CD4-positive, alpha-beta T cell (primary cell): ENCODE measurements at regions of chr3 and their contacts with region 1.

Region 1: GRCh38 chr3:197256836-197257444 is 41.5 kb downstream of the DLG1 start:
- DNase-seq: peak in 9 of 14 experiments; percentile 9 to 74 (median 21)
- ATAC-seq: no peak
- H3K4me3 ChIP-seq: no peak overlapping the region
- H3K4me3 Mint-ChIP-seq: no peak overlapping the region
- H3K27ac ChIP-seq: no peak overlapping the region
- H3K27ac Mint-ChIP-seq: no peak overlapping the region
- H3K4me1 ChIP-seq: peaks cover 4% of the 10 kb centered on the region
- H3K4me1 Mint-ChIP-seq: peaks cover 74% of the 10 kb centered on the region
- H3K27me3 ChIP-seq: no peaks in the 10 kb centered on the region
- H3K27me3 Mint-ChIP-seq: no peaks in the 10 kb centered on the region
- CTCF ChIP-seq: peak; percentile 82

Region 2: GRCh38 chr3:197456261-197457091 is 199.5 kb after region 1 on chr3:
- CTCF ChIA-PET with region 1: interaction called, 5 read pairs
- POLR2A ChIA-PET with region 1: no interaction called
- intact Hi-C with region 1: loop called (anchors 1 to 2 kb)
- DNase-seq: peak in 10 of 14 experiments; percentile 11 to 65 (median 45)
- ATAC-seq: peak; percentile 35
- H3K4me3 ChIP-seq: peak overlapping the region; percentile 78
- H3K4me3 Mint-ChIP-seq: peak overlapping the region; percentile 91
- H3K27ac ChIP-seq: no peak overlapping the region
- H3K27ac Mint-ChIP-seq: peak overlapping the region; percentile 49
- H3K4me1 ChIP-seq: peaks cover 29% of the 10 kb centered on the region
- H3K4me1 Mint-ChIP-seq: peaks cover 24% of the 10 kb centered on the region
- H3K27me3 ChIP-seq: no peaks in the 10 kb centered on the region
- H3K27me3 Mint-ChIP-seq: no peaks in the 10 kb centered on the region
- CTCF ChIP-seq: no peak

Region 3: GRCh38 chr3:197511130-197511529 is 254.2 kb after region 1 on chr3:
- CTCF ChIA-PET with region 1: interaction called, 15 read pairs
- POLR2A ChIA-PET with region 1: interaction called, 3 read pairs
- intact Hi-C with region 1: loop called (anchors 1 kb)
- DNase-seq: no peak
- ATAC-seq: no peak
- H3K4me3 ChIP-seq: no peak overlapping the region
- H3K4me3 Mint-ChIP-seq: no peak overlapping the region
- H3K27ac ChIP-seq: no peak overlapping the region
- H3K27ac Mint-ChIP-seq: no peak overlapping the region
- H3K4me1 ChIP-seq: peaks cover 8% of the 10 kb centered on the region
- H3K4me1 Mint-ChIP-seq: peaks cover 3% of the 10 kb centered on the region
- H3K27me3 ChIP-seq: no peaks in the 10 kb centered on the region
- H3K27me3 Mint-ChIP-seq: no peaks in the 10 kb centered on the region
- CTCF ChIP-seq: no peak